ENCODE measurements at regions of chr21 and their contacts with region 1.

Region 1: GRCh38 chr21:31107871-31108270 is 69.6 kb upstream of the KRTAP19-8 start:
- DNase-seq: no peak
- ATAC-seq: peak; percentile 61
- H3K4me3 ChIP-seq: no peak overlapping the region
- H3K27ac ChIP-seq: peak overlapping the region in 1 of 2 donors; percentile 38
- H3K4me1 ChIP-seq: peaks cover 0 to 15% of the 10 kb centered on the region in 2 donors
- H3K27me3 ChIP-seq: no peaks in the 10 kb centered on the region
- CTCF ChIP-seq: no peak

Region 2: DNA sequence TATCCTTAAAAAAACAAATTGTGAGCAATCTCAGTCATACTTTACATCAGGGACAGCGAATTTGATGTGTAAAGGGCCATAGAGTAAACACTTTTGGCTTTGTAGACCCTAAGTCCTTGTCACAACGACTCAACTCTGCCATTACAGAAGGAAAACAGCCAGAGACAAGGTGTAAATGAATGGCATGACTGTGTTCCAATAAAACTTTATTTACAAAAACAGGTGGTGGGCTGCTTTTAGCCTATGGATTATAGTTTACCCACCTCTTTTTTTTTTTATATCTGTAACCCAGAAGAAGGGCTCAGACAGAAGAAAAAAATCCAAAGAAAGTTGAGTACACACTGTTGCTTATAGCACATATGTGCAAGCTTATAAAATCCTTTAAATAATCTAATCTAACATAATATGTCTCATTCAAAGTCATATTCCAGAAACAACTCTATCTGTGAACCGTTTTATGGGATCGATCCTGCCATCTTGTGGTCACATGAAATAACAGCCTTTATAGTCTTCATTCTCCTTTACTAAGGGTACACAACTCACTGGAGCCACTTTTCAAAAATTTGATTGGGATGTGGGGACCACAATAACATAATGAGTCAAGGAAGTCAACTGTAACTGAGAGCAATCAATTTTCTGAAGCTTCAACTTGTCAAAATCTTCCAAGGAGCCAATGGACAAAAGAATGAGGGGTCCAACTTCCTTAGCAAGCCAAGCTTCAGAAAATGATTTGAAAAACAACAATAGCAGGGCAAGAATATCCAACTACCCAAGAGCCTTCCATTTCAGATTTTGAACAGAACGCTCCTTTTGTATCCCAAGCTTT is 72.6 kb after region 1 on chr21:
- intact Hi-C with region 1: loop called in 1 of 2 experiments (anchors 5 kb)
- DNase-seq: peak in 1 of 4 donors; percentile 59
- ATAC-seq: peak; percentile 70
- H3K4me3 ChIP-seq: no peak overlapping the region
- H3K27ac ChIP-seq: no peak overlapping the region
- H3K4me1 ChIP-seq: peaks cover 0 to 24% of the 10 kb centered on the region in 2 donors
- H3K27me3 ChIP-seq: no peaks in the 10 kb centered on the region
- CTCF ChIP-seq: peak; percentile 41 to 50